ENCODE measurements at regions of chr7 and their contacts with region 1.

Region 1: DNA sequence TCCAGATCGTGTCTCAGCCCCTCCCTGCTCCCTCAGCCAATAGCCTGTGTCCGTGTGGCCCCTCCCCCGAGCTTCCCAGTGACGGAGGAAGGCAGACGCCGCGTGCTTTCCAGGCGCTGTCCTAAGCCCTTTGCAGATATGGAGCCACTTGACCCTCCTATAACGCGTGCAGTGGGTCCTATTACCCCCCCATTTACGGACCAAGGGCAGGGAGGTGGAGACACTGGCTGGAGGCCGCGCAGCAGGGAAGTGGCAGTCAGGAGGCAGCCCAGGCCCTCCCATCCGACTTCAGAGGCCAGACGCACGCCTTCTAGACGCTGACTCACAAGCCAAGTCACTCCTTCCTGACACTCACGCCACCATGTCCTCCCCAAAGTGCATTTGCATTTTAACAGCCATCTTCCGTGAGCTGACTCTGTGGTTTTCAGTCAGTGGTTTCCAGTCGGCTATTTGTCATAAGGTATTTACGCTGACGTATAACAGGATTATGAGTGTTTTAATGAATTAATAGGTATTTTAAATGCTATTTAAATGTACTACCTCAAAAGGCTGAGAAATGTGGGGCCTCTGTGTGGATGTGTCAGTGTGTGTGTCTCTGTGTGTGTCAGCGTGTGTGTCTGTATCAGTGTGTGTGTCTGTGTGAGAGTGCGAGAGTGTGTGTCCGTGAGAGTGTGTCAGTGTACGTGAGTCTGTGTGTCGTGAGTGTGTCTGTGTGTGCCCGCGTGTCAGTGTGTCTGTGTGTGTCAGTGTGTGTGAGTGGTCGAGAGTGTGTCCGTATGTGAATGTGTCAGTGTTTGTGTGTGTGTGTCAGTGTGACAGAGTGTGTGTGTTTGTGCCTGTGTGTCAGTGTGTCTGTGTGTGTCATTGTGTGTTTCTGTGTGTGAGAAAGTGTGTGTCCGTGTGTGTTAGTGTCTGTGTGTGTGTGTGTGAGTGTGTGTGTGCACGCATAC is 92.0 kb upstream of the INSIG1 start:
- DNase-seq: peak; percentile 99 to 100 (median 100)
- ATAC-seq: peak; percentile 94
- H3K4me3 ChIP-seq: peak overlapping the region; percentile 56
- H3K27ac ChIP-seq: peak overlapping the region; percentile 100
- H3K4me1 ChIP-seq: peaks cover 25 to 67% of the 10 kb centered on the region in 2 experiments
- H3K27me3 ChIP-seq: no peaks in the 10 kb centered on the region; a peak in 1 of 5 replicates
- CTCF ChIP-seq: peak in 1 of 3 experiments; percentile 29; a peak in 1 of 6 replicates
- EP300 ChIP-seq: peak; percentile 82
- POLR2A ChIP-seq: peak; percentile 96
- RAD21 ChIP-seq: peak; percentile 22 to 36; a peak in 3 of 4 replicates

Region 2: GRCh38 chr7:155011081-155011480 is 194.6 kb before region 1 on chr7:
- CTCF ChIA-PET with region 1: no interaction called
- POLR2A ChIA-PET with region 1: no interaction called
- in situ Hi-C with region 1: no loop called
- intact Hi-C with region 1: no loop called
- DNase-seq: no peak
- ATAC-seq: no peak
- H3K4me3 ChIP-seq: no peak overlapping the region
- H3K27ac ChIP-seq: no peak overlapping the region
- H3K4me1 ChIP-seq: no peaks in the 10 kb centered on the region
- H3K27me3 ChIP-seq: peaks cover 25 to 44% of the 10 kb centered on the region in 2 experiments; a peak in 4 of 5 replicates
- CTCF ChIP-seq: no peak
- EP300 ChIP-seq: no peak
- POLR2A ChIP-seq: no peak
- RAD21 ChIP-seq: no peak

Region 3: GRCh38 chr7:155190688-155191087 is 15.0 kb before region 1 on chr7:
- CTCF ChIA-PET with region 1: no interaction called
- POLR2A ChIA-PET with region 1: interaction called, 12 read pairs
- in situ Hi-C with region 1: no loop called
- intact Hi-C with region 1: no loop called
- DNase-seq: peak; percentile 72 to 92 (median 89)
- ATAC-seq: peak; percentile 93
- H3K4me3 ChIP-seq: no peak overlapping the region
- H3K27ac ChIP-seq: no peak overlapping the region
- H3K4me1 ChIP-seq: peaks cover 0 to 7% of the 10 kb centered on the region in 2 experiments; a peak in 2 of 5 replicates
- H3K27me3 ChIP-seq: peaks cover 36 to 62% of the 10 kb centered on the region in 2 experiments
- CTCF ChIP-seq: peak; percentile 92 to 97 (median 95)
- EP300 ChIP-seq: no peak
- POLR2A ChIP-seq: no peak
- RAD21 ChIP-seq: peak; percentile 96 to 97

Region 4: GRCh38 chr7:155234158-155234492 is 28.5 kb after region 1 on chr7:
- CTCF ChIA-PET with region 1: no interaction called
- POLR2A ChIA-PET with region 1: interaction called, 16 read pairs
- in situ Hi-C with region 1: no loop called
- intact Hi-C with region 1: no loop called
- DNase-seq: no peak
- ATAC-seq: peak; percentile 45
- H3K4me3 ChIP-seq: no peak overlapping the region
- H3K27ac ChIP-seq: no peak overlapping the region
- H3K4me1 ChIP-seq: peaks cover 0 to 7% of the 10 kb centered on the region in 2 experiments; a peak in 1 of 5 replicates
- H3K27me3 ChIP-seq: peaks cover 83 to 97% of the 10 kb centered on the region in 2 experiments
- CTCF ChIP-seq: no peak
- EP300 ChIP-seq: no peak
- POLR2A ChIP-seq: no peak
- RAD21 ChIP-seq: no peak

Region 5: DNA sequence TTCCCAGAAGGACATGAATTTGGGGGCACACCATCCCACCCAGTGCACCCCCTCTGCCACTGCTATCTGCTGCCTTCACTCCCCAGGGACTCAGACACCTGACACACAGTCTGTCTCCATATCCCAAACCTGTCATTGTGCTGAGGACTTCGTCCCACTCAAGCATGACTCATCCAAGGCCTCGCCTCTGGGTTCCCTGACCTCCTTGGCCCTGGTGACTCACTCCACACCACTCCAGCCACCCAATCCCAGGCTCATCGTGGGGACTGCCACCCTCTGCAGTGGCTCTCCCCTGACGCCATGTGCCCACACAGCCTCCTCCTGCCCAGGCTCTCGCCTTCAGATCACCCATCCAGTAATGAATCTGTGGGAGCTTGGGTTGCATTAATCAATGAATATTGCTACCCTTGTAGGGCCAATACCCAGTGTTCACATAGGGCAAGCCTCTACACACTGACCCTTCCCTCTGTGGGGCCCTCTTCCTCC is 85.4 kb after region 1 on chr7:
- CTCF ChIA-PET with region 1: no interaction called
- POLR2A ChIA-PET with region 1: interaction called, 26 read pairs
- in situ Hi-C with region 1: loop called (anchors 5 kb)
- intact Hi-C with region 1: no loop called
- DNase-seq: peak; percentile 92 to 95 (median 93)
- ATAC-seq: peak; percentile 91
- H3K4me3 ChIP-seq: no peak overlapping the region
- H3K27ac ChIP-seq: peak overlapping the region; percentile 24; the same call in 2 of the 3 replicates
- H3K4me1 ChIP-seq: peaks cover 46 to 60% of the 10 kb centered on the region in 2 experiments
- H3K27me3 ChIP-seq: peaks cover 12 to 22% of the 10 kb centered on the region in 2 experiments; a peak in 4 of 5 replicates
- CTCF ChIP-seq: peak in 1 of 3 experiments; percentile 1; a peak in 1 of 6 replicates
- EP300 ChIP-seq: peak; percentile 71
- POLR2A ChIP-seq: no peak
- RAD21 ChIP-seq: 0 out of 4 replicates have a peak, but pooled peaks of 1 of the 2 experiments have one; percentile 13

Region 6: GRCh38 chr7:155310425-155311114 is 104.9 kb after region 1 on chr7:
- CTCF ChIA-PET with region 1: no interaction called
- POLR2A ChIA-PET with region 1: no interaction called
- in situ Hi-C with region 1: no loop called
- intact Hi-C with region 1: no loop called
- DNase-seq: peak in 1 of 4 experiments; percentile 57
- ATAC-seq: peak; percentile 49
- H3K4me3 ChIP-seq: no peak overlapping the region
- H3K27ac ChIP-seq: no peak overlapping the region
- H3K4me1 ChIP-seq: 0 out of 5 replicates have a peak, but pooled peaks cover 1 to 2% of the 10 kb centered on the region in 2 experiments
- H3K27me3 ChIP-seq: peaks cover 3 to 18% of the 10 kb centered on the region in 2 experiments; a peak in 4 of 5 replicates
- CTCF ChIP-seq: no peak
- EP300 ChIP-seq: no peak
- POLR2A ChIP-seq: no peak; the same call in none of the 2 replicates
- RAD21 ChIP-seq: no peak

Region 7: DNA sequence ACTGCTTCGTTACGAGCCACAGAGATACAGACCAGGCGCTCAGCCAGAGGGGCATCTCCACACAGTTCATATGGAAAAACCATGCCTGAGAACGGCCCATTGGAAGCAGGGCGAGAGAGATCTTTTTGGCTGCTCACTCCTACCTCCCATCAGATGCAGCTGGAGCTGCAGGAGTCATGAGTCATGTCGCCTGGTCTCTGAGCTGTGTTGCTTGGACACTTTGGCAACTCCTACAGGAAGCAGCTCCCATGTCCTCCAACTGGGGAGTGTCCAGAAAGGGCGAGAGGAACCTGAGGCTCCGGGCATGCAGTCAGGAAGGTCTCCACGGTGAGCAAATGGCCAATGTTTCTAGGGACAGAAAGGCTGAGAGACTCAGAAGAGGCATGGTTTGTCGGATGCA is 116.9 kb after region 1 on chr7:
- CTCF ChIA-PET with region 1: no interaction called
- POLR2A ChIA-PET with region 1: interaction called, 15 read pairs
- in situ Hi-C with region 1: no loop called
- intact Hi-C with region 1: no loop called
- DNase-seq: no peak
- ATAC-seq: no peak
- H3K4me3 ChIP-seq: no peak overlapping the region
- H3K27ac ChIP-seq: no peak overlapping the region
- H3K4me1 ChIP-seq: peaks cover 4 to 16% of the 10 kb centered on the region in 2 experiments
- H3K27me3 ChIP-seq: peaks cover 0 to 21% of the 10 kb centered on the region in 2 experiments; a peak in 3 of 5 replicates
- CTCF ChIP-seq: no peak
- EP300 ChIP-seq: no peak
- POLR2A ChIP-seq: no peak
- RAD21 ChIP-seq: no peak